AG04449 (cell line): ENCODE measurements at regions of chr2 and their contacts with region 1.

Region 1: DNA sequence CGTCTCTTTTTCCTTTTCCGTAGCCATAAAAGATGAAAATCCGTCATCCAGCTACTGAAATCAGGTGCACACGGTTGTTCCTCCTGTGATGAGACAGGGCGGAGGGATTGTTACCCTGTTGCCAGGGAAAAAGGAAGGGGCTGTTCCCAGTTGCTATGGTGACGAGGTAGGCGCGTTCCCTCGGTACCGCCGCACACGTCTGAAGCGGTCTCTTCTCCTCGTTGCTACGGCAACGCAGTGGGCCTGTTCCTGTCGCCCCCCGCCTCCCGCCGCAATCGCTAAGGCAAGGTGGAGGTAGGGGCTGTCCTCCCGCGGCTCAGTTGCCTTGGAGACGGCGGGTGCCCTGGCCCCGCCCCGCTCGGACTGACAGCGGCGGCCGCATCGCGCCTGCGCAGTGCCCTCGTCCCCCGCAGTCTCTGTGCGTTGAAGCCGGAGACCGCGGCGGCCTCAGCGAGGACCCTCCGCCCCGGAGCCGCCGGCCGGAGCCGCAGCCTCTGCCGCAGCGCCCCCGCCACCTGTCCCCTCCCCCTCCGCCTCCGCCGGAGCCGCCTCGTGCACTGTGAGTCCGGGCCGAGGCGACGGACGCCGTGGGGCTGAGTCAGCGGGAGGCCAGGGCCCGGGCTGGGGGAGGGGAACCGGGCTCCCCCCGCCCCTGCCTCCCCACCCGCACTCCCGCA is at the start of gene MAPRE3:
- DNase-seq: no peak
- H3K4me3 ChIP-seq: peak within 1 kb of the TSS; percentile 88
- CTCF ChIP-seq: no peak

Region 2: GRCh38 chr2:26942543-26943295 is 27.7 kb before region 1 on chr2:
- CTCF ChIA-PET with region 1: interaction called, 21 read pairs
- POLR2A ChIA-PET with region 1: no interaction called
- DNase-seq: no peak
- H3K4me3 ChIP-seq: no peak overlapping the region
- CTCF ChIP-seq: peak; percentile 77